PC-3 (cell line): ENCODE measurements at regions of chr7 and their contacts with region 1.

Region 1: GRCh38 chr7:25069900-25070443 is 55.1 kb downstream of the CYCS start:
- DNase-seq: peak; percentile 87
- ATAC-seq: peak; percentile 76
- H3K4me3 ChIP-seq: peak overlapping the region; percentile 40
- H3K27ac ChIP-seq: no peak overlapping the region
- H3K4me1 ChIP-seq: peaks cover 13% of the 10 kb centered on the region
- H3K27me3 ChIP-seq: no peaks in the 10 kb centered on the region
- CTCF ChIP-seq: peak; percentile 80

Region 2: DNA sequence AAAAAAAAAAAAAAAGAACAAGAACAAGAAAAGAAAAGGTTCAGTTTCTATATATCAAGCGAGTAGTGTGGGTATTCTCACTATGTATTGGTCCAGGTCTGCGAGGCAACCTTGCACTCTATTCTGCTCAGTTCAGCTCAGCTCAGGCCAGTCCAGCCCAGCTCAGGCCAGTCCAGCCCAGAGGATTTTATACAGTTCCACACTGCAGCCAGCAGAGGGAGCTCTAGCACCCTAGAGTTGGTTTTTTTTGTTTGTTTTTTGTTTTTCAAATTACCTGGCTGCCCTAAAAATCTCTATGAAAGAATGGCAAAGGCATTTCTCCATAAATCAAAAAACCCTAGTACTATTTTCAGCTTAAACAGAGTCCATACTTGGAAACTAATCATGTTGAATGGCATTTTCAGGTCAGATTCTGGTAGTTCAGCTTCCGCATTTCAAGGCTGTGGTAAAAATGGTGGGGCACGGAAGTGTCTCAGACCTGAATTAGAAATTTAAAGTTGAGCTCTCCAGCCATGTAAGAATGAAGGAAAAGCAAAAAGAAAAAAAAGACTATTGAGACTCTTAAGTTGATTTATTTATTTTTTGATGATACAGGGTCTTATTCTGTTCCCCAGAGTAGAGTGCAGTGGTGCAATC is 257.5 kb before region 1 on chr7:
- CTCF ChIA-PET with region 1: interaction called, 19 read pairs
- POLR2A ChIA-PET with region 1: no interaction called
- intact Hi-C with region 1: loop called (anchors 1 kb)
- DNase-seq: peak; percentile 67
- ATAC-seq: peak; percentile 93
- H3K4me3 ChIP-seq: no peak overlapping the region
- H3K27ac ChIP-seq: no peak overlapping the region
- H3K4me1 ChIP-seq: no peaks in the 10 kb centered on the region
- H3K27me3 ChIP-seq: no peaks in the 10 kb centered on the region
- CTCF ChIP-seq: peak; percentile 90

Region 3: DNA sequence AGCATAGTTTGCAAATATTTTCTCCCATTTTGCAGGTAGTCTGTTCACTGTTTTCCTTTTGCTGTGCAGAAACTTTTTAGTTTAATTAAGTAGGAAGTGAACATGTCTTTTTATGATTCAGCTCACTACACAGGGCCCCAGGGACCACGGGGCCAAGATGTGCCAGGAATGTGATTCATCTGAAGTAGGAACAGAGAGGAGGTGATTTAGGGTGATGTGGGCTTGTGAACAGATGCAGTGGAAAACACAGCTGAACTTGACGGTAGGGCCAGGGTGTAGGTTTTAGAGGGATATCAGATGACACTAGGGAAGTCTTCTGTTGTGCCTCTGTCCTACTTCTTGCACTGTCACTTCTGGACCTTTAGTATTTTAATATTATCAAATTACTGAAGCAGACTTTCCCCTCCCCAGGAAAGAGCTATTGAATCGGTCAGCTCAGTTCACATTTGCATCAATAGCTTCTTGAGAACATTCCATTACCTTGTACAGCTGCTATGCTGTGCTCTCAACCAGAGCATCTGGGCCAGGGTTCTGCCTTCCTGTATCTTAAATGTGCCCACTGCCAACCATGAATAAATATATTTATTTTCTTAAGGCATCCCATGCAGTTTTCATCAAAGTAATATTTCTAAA is 186.9 kb before region 1 on chr7:
- CTCF ChIA-PET with region 1: no interaction called
- POLR2A ChIA-PET with region 1: no interaction called
- intact Hi-C with region 1: loop called (anchors 5 kb)
- DNase-seq: peak; percentile 66
- ATAC-seq: peak; percentile 95
- H3K4me3 ChIP-seq: no peak overlapping the region
- H3K27ac ChIP-seq: no peak overlapping the region
- H3K4me1 ChIP-seq: peaks cover 16% of the 10 kb centered on the region
- H3K27me3 ChIP-seq: no peaks in the 10 kb centered on the region
- CTCF ChIP-seq: no peak

Region 4: GRCh38 chr7:24896031-24896501 is 173.9 kb before region 1 on chr7:
- CTCF ChIA-PET with region 1: interaction called, 4 read pairs
- POLR2A ChIA-PET with region 1: no interaction called
- intact Hi-C with region 1: loop called (anchors 5 kb)
- DNase-seq: no peak
- ATAC-seq: no peak
- H3K4me3 ChIP-seq: no peak overlapping the region
- H3K27ac ChIP-seq: no peak overlapping the region
- H3K4me1 ChIP-seq: peaks cover 18% of the 10 kb centered on the region
- H3K27me3 ChIP-seq: no peaks in the 10 kb centered on the region
- CTCF ChIP-seq: no peak

Region 5: GRCh38 chr7:25028370-25029021 is 41.5 kb before region 1 on chr7:
- CTCF ChIA-PET with region 1: interaction called, 3 read pairs
- POLR2A ChIA-PET with region 1: no interaction called
- intact Hi-C with region 1: loop called (anchors 1 kb)
- DNase-seq: peak; percentile 84
- ATAC-seq: peak; percentile 57
- H3K4me3 ChIP-seq: no peak overlapping the region
- H3K27ac ChIP-seq: peak overlapping the region; percentile 26
- H3K4me1 ChIP-seq: peaks cover 47% of the 10 kb centered on the region
- H3K27me3 ChIP-seq: no peaks in the 10 kb centered on the region
- CTCF ChIP-seq: no peak

Region 6: GRCh38 chr7:25093268-25093826 is 23.4 kb after region 1 on chr7:
- CTCF ChIA-PET with region 1: interaction called, 5 read pairs
- POLR2A ChIA-PET with region 1: no interaction called
- intact Hi-C with region 1: loop called (anchors 1 kb)
- DNase-seq: peak; percentile 90
- ATAC-seq: peak; percentile 89
- H3K4me3 ChIP-seq: no peak overlapping the region
- H3K27ac ChIP-seq: no peak overlapping the region
- H3K4me1 ChIP-seq: peaks cover 4% of the 10 kb centered on the region; the same call in 1 of the 2 replicates
- H3K27me3 ChIP-seq: no peaks in the 10 kb centered on the region
- CTCF ChIP-seq: peak; percentile 91